ENCODE measurements at regions of chr14 and their contacts with region 1.

Region 1: DNA sequence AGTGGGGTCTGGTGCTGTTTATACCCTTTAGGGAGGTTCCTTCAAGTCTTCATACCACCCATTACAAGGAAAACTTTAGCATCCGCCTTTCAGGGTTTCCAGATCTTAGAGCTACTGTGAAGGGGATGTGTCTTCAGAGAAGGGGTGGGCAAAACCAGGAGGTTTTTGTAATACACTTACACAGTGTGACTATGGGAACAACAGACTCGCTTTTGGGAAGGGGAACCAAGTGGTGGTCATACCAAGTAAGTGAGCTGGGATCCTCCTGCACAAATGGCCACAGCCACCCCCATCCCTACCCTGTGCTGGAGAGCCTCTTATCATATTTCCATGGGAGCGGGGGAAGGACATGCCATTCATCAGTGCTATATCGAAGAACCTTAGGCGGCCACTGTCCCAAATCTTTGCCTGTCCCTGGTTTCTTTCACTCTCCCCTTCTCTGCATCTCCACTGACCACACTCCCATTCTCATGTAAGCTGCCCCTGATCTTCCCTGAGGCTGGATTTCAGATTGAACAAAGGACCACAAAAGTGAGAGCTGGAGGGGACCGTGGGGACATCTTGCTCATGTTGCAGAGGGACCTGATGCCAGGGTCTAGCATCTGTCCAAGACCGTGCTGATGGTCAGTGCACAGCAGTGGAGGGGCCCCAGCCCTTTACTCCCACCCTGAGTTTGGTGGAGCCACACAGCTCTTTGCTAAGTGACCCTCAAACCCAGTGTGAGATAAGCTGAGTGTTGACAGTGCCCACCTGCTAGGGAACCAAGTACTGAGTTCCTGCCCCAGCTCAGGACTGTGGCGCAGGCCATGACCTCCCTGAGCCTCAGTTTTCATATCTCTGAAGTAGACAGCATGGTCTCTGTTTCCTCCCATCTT is 51.4 kb downstream of the DAD1 start:
- DNase-seq: no peak
- ATAC-seq: peak; percentile 34; the same call in 2 of the 3 replicates
- H3K4me3 ChIP-seq: no peak overlapping the region
- H3K27ac ChIP-seq: no peak overlapping the region
- H3K4me1 ChIP-seq: no peaks in the 10 kb centered on the region
- H3K27me3 ChIP-seq: peaks cover 4 to 10% of the 10 kb centered on the region in 2 experiments; a peak in 3 of 5 replicates
- CTCF ChIP-seq: no peak
- EP300 ChIP-seq: no peak
- POLR2A ChIP-seq: no peak
- RAD21 ChIP-seq: no peak

Region 2: GRCh38 chr14:22472935-22473854 is 64.5 kb before region 1 on chr14:
- CTCF ChIA-PET with region 1: no interaction called
- POLR2A ChIA-PET with region 1: no interaction called
- in situ Hi-C with region 1: no loop called
- intact Hi-C with region 1: no loop called
- DNase-seq: peak; percentile 56
- ATAC-seq: peak; percentile 65
- H3K4me3 ChIP-seq: no peak overlapping the region
- H3K27ac ChIP-seq: no peak overlapping the region
- H3K4me1 ChIP-seq: no peaks in the 10 kb centered on the region
- H3K27me3 ChIP-seq: peaks cover 0 to 4% of the 10 kb centered on the region in 2 experiments; a peak in 1 of 5 replicates
- CTCF ChIP-seq: peak; percentile 75
- EP300 ChIP-seq: no peak
- POLR2A ChIP-seq: no peak
- RAD21 ChIP-seq: peak; percentile 67

Region 3: GRCh38 chr14:22494486-22495135 is 43.1 kb before region 1 on chr14:
- CTCF ChIA-PET with region 1: no interaction called
- POLR2A ChIA-PET with region 1: no interaction called
- in situ Hi-C with region 1: no loop called
- intact Hi-C with region 1: loop called (anchors 1 kb)
- DNase-seq: no peak
- ATAC-seq: peak; percentile 17; the same call in 1 of the 3 replicates
- H3K4me3 ChIP-seq: no peak overlapping the region
- H3K27ac ChIP-seq: no peak overlapping the region
- H3K4me1 ChIP-seq: no peaks in the 10 kb centered on the region
- H3K27me3 ChIP-seq: peaks cover 2 to 24% of the 10 kb centered on the region in 2 experiments; a peak in 4 of 5 replicates
- CTCF ChIP-seq: no peak
- EP300 ChIP-seq: no peak
- POLR2A ChIP-seq: no peak
- RAD21 ChIP-seq: no peak

Region 4: GRCh38 chr14:22519877-22520685 is 17.6 kb before region 1 on chr14:
- CTCF ChIA-PET with region 1: no interaction called
- POLR2A ChIA-PET with region 1: no interaction called
- in situ Hi-C with region 1: no loop called
- intact Hi-C with region 1: no loop called
- DNase-seq: no peak
- ATAC-seq: no peak
- H3K4me3 ChIP-seq: no peak overlapping the region
- H3K27ac ChIP-seq: no peak overlapping the region
- H3K4me1 ChIP-seq: peaks cover 9% of the 10 kb centered on the region
- H3K27me3 ChIP-seq: peaks cover 2 to 14% of the 10 kb centered on the region in 2 experiments; a peak in 2 of 5 replicates
- CTCF ChIP-seq: no peak
- EP300 ChIP-seq: no peak
- POLR2A ChIP-seq: no peak
- RAD21 ChIP-seq: no peak